ENCODE measurements at regions of chr20 and their contacts with region 1.

Region 1: DNA sequence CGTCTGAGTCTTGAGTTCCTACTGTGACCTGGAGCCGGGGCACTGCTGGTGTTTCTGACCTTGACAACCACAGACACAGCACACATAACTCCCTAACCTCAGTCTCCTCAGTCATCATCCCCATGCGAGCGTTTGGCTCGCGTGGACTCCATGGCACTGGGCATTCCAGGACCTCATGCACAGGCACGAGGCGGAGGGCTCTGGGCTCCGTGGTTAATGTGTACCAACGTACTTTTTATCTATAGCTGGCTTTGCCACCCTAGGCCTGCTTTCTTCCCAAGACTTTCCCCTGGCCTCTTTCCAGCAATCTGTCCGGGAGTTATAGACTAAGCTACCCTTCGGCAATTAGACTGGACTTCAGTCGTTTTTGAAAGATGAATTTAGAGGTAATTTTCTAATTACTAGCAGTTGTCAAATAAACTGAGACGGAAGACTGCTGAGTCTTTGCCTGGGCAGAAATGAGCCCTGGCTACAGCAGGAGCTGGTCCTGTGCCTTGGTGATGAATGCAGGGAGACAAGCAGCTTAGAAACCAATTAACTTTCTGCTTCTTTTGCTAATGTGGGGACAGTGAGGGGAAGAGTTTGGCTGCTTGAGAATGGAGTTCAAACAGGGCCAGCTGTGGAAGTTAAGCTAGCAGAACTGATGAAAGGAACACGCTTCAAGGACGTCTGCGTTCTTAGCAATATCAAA is 16.1 kb upstream of the CTCFL start:
- DNase-seq: no peak
- ATAC-seq: no peak
- H3K4me3 ChIP-seq: no peak overlapping the region
- H3K27ac ChIP-seq: no peak overlapping the region
- H3K4me1 ChIP-seq: no peaks in the 10 kb centered on the region
- CTCF ChIP-seq: no peak
- EP300 ChIP-seq: no peak
- POLR2A ChIP-seq: no peak
- RAD21 ChIP-seq: no peak

Region 2: DNA sequence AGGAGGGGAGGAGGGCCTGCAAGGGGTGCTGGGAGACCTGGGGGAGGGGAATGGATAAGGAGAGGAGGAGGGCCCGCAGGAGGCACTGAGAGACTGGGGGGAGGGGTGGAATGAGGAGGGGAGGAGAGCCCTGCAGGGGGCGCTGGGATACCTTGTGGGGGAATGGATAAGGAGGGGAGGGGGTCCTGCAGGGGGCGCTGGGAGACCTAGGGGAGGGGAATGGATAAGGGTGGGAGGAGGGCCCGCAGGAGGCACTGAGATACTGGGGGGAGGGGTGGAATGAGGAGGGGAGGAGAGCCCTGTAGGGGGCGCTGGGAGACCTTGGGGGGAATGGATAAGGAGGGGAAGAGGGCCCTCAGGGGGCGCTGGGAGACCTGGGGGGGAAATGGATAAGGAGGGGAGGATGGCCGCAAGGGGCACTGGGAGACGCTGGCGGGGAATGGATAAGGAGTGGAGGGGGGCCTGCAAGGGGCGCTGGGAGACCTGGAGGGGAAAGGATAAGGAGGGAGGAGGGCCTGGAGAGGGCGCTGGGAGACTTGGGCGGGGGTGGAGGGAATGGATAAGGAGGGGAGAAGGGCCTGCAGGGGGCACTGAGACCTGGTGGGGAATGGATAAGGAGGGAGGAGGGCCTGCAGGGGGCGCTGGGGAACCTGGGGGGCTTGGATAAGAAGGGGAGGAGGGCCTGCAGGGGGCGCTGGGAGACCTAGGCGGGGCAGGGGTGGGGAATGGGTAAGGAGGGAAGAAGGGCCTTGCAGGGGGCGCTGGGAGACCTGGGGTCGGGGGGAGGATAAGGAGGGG is 14.7 kb before region 1 on chr20:
- CTCF ChIA-PET with region 1: interaction called, 10 read pairs
- POLR2A ChIA-PET with region 1: no interaction called
- DNase-seq: peak in 1 of 2 experiments; percentile 42
- ATAC-seq: peak in 1 of 2 experiments; percentile 74; a peak in 3 of 6 replicates
- H3K4me3 ChIP-seq: no peak overlapping the region
- H3K27ac ChIP-seq: peak overlapping the region in 1 of 2 experiments; percentile 16; a peak in 1 of 6 replicates
- H3K4me1 ChIP-seq: peaks cover 6% of the 10 kb centered on the region; the same call in 1 of the 3 replicates
- CTCF ChIP-seq: peak; percentile 15; the same call in 1 of the 3 replicates
- EP300 ChIP-seq: no peak
- POLR2A ChIP-seq: no peak
- RAD21 ChIP-seq: no peak

Region 3: DNA sequence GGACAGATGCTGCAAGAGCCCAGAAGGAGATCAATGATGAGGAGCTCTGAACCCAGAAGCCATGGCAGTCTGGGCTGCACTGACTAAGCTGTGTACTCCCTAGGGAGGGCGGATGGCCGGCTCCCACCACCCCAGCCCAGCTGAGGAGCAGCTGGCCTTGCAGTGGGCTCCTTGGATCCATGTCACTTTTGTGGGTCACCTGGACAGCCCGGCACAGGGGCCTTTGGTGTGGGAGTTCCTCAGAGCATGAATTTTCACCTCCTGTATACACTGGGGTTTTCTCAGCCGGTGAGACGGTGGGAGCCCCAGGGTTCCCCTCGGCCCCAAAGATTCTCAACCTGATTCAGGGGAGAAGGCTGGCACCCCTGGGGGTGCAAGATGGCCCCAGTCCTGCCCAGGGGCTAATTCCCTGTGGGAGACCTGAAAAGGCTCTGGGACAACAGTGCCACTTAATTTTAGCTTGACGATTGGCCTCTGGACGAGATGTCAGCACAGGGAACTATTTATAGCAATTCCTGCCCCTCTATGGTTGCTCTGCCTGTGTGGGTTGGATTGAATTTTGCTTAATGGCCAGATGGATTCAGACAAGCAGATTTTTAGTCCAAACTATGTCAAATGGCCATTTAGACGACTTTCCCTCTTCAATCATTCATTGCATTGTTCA is 290.4 kb after region 1 on chr20:
- CTCF ChIA-PET with region 1: no interaction called
- POLR2A ChIA-PET with region 1: no interaction called
- DNase-seq: no peak
- ATAC-seq: no peak; a peak in 1 of 6 replicates
- H3K4me3 ChIP-seq: no peak overlapping the region
- H3K27ac ChIP-seq: peak overlapping the region in 1 of 2 experiments; percentile 50; a peak in 2 of 6 replicates
- H3K4me1 ChIP-seq: no peaks in the 10 kb centered on the region
- CTCF ChIP-seq: no peak
- EP300 ChIP-seq: no peak
- POLR2A ChIP-seq: no peak
- RAD21 ChIP-seq: no peak

Measured in A549 (cell line).